Mammary epithelial cell (primary cell): ENCODE measurements at regions of chr11 and their contacts with region 1.

Region 1: DNA sequence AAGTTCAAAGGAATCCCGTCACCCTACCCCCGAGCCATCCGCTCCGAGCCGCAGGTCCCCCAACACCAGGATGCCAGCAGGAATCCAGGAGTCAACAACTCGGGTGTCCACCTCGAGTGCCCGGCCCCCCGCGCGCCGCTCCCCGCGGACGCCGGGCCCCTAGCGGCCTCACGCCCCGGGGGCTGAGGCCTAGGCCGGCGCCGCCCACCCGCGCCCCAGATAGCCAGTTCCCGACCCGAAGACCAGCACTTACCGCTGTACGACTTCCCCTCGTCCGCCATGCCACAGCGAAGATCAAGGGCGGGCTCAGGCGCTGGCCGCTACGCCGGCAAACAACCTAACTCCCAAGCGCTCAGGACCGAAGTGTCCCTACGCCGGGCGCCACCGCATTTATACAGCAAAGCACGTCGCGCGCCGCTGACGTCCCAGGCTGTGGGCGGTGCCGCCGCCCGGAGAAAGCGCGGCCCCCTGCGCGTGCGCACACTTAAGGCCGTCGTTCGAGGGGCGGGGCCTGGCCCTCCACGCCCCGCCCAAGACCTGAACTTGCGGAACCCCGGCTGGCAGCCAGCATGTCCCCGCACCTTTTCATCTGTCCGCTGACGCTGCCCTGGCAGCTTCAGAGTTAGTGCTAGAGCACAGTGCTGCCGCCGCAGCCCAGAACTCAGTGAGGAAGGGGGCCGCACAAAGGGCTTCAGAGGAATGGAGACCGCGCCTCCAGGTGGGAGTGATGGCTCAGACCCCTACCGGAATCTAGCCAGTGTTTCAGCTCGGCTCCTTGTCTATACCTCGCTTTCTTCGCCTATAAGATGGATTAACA is at the start of gene NXF1:
- DNase-seq: peak; percentile 92
- H3K4me3 ChIP-seq: peak within 1 kb of the TSS; percentile 73 to 85 (median 76)
- H3K27ac ChIP-seq: peak within 1 kb of the TSS; percentile 77
- H3K4me1 ChIP-seq: peaks cover 12% of the 10 kb centered on the region
- H3K27me3 ChIP-seq: no peaks in the 10 kb centered on the region
- CTCF ChIP-seq: no peak
- total RNA-seq, gene NXF1: 24.3 to 43.4 TPM

Region 2: GRCh38 chr11:62831520-62832335 is 26.4 kb after region 1 on chr11 and contains the start of gene STX5:
- CTCF ChIA-PET with region 1: no interaction called
- dilution Hi-C with region 1: no loop called
- in situ Hi-C with region 1: no loop called
- intact Hi-C with region 1: loop called (anchors 2 kb)
- DNase-seq: peak; percentile 97
- H3K4me3 ChIP-seq: peak within 1 kb of the TSS; percentile 59 to 84 (median 75)
- H3K27ac ChIP-seq: peak within 1 kb of the TSS; percentile 87
- H3K4me1 ChIP-seq: peaks cover 19% of the 10 kb centered on the region
- H3K27me3 ChIP-seq: no peaks in the 10 kb centered on the region
- CTCF ChIP-seq: no peak
- total RNA-seq, gene STX5: 26.7 to 44.1 TPM